ENCODE measurements at regions of chr7 and their contacts with region 1.

Region 1: DNA sequence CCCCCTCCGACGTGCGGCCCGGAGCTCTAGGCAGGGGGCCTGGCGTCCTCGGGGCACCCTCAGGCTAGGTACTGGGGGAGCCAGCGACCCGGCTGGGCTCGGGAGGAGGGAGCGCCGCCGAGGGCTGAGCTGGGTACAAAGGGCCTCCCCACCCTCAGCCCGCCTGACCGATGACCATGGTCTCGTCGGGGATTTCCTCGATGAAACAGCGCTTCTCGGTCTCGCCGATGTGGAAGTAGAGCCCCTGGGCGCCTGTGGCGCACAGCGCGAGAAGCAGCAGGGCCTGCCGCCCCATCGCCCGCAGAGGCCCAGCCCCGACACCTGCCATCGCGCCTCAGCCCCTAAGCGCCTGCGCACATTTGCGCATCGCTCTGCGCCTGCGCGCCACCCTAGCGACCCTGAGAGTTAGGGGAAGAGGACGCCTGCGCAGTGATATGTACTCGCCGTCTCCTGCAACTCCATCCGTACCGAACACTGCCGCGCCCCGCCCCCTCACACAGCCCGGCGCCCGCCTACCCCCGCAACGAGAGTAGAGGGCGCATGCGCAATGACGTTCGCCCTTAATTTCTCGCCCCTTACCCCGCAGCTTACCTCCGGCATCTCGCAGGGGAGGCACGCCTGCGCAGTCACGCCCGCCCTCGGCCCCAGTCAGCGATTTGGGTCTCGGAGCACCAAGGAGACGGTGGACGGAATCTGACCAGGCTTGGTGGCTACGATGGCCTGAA is at the start of gene TMED4:
- DNase-seq: peak; percentile 100
- ATAC-seq: peak; percentile 93
- H3K4me3 Mint-ChIP-seq: peak within 1 kb of the TSS; percentile 93
- H3K27ac Mint-ChIP-seq: peak within 1 kb of the TSS; percentile 95
- H3K4me1 Mint-ChIP-seq: peaks cover 22% of the 10 kb centered on the region
- H3K27me3 Mint-ChIP-seq: peaks cover 7% of the 10 kb centered on the region
- total RNA-seq, gene TMED4: 91.4 to 94.3 TPM

Region 2: DNA sequence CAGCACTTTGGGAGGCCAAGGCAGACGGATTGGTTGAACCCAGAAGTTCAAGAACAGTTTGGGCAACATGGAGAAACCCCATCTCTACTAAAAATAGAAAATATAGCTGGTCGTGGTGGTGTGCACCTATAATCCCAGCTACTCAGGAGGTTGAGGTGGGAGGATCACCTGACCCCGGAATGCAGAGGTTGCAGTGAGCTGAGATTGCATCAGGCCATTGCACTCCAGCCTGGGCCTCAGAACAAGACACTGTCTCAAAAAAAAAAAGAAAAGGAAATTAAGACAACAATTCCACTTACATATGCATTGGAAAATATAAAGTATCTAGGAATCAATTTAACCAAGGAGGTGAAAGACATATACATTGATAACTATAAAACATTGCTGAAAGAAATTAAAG is 17.2 kb after region 1 on chr7:
- POLR2A ChIA-PET with region 1: no interaction called
- DNase-seq: no peak
- ATAC-seq: no peak
- H3K4me3 Mint-ChIP-seq: no peak overlapping the region
- H3K27ac Mint-ChIP-seq: no peak overlapping the region
- H3K4me1 Mint-ChIP-seq: peaks cover 4% of the 10 kb centered on the region
- H3K27me3 Mint-ChIP-seq: peaks cover 20% of the 10 kb centered on the region

Region 3: GRCh38 chr7:44633254-44634186 is 51.5 kb after region 1 on chr7:
- POLR2A ChIA-PET with region 1: interaction called, 11 read pairs
- DNase-seq: no peak
- ATAC-seq: peak; percentile 6
- H3K4me3 Mint-ChIP-seq: no peak overlapping the region
- H3K27ac Mint-ChIP-seq: peak overlapping the region; percentile 73
- H3K4me1 Mint-ChIP-seq: peaks cover 72% of the 10 kb centered on the region
- H3K27me3 Mint-ChIP-seq: no peaks in the 10 kb centered on the region

Region 4: DNA sequence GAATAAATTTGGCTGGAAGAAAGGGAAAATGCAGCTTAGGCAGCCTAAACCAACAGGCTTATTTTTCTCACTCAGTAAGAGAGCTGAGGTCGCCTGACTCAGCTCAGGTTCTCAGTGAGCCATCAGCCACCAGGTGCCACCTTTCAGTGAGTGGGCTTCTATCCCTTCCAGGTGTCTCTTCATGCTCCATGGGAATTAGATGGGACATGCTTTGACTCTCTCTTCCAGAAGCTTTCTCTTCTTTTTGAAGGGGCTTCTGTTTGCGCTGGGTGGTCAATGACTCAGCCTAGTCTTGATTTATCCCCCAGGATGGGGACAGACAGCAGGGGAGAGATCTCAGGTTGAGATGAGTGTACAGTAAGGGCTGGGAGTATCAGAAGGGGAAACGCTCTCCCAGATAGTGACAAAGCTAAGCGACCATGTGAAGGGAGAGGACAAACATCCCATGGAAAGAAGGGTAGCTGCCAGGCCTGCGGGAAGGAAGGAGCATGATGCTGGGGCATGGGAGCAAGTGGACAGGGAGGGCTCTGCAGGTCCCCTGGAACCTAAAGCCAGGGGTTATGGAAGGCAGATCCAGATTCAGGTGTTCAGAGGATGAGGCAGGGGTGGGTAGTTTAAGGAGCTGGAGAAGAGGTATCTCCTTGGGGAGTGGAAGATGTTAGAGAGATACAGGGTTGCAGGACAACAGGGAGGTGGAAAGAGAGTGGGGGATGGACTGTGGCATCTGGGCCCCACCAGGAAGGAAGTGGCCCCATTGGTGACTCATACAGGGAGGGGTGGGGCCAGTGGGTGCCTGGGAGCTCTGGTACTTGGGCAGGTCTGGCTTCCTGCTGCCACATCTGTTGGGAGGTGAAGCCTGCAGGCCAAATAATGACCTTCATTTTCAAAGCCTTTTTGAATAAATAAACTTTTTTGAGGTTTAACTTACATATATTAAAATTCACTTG is 56.8 kb after region 1 on chr7:
- POLR2A ChIA-PET with region 1: interaction called, 18 read pairs
- DNase-seq: peak; percentile 78
- ATAC-seq: peak; percentile 86
- H3K4me3 Mint-ChIP-seq: peak overlapping the region; percentile 86
- H3K27ac Mint-ChIP-seq: peak overlapping the region; percentile 99
- H3K4me1 Mint-ChIP-seq: peaks cover 58% of the 10 kb centered on the region
- H3K27me3 Mint-ChIP-seq: no peaks in the 10 kb centered on the region

Region 5: DNA sequence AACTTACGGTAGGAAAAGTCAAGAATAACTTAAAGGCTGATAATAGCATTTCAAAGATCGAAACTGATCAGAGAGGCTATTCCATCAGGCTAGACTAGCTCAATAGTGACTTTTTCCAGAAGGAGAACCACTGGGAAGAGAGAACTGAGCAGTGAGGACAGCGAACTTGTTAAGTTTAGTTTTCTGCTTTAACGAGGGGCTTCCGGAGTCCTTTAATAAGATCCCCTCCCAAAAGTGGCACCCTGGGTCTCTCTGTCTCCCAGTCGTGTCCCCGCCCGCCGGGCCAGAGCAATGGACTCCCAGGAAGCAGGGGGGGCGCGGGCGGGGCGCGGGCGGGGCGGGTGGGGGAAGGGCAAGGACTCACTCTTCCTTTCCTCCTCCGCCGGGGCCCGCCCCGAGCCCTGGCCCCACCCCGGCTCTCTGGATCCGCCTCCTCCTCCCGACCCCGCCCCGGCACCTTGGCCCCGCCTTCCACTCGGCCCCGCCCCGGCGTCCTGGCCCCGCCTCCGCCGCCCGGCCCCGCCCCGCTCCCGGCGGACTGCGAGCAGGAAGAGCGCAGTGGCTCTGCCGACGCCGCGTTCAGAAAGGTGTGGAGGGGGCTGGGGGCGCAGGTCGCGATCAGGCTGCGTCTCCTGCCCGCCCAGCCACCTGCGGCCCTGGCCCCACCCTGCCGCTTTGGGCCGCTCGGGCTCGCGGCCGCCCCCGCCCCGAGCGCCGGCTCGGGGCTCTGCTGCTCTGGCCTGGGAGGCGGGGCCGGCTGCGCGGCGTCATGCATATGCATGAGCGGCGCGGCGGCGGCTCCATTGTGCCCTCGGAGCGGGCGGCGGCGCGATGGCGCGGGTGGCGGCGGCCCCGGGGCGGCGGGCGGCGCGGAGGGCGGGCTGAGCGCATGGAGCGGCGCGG is 166.3 kb after region 1 on chr7 and contains the start of gene ZMIZ2:
- POLR2A ChIA-PET with region 1: interaction called, 12 read pairs
- DNase-seq: peak; percentile 98
- ATAC-seq: peak; percentile 86
- H3K4me3 Mint-ChIP-seq: peak within 1 kb of the TSS; percentile 83
- H3K27ac Mint-ChIP-seq: peak within 1 kb of the TSS; percentile 88
- H3K4me1 Mint-ChIP-seq: peaks cover 34% of the 10 kb centered on the region
- H3K27me3 Mint-ChIP-seq: no peaks in the 10 kb centered on the region
- total RNA-seq, gene ZMIZ2: 120 to 124 TPM

Region 6: DNA sequence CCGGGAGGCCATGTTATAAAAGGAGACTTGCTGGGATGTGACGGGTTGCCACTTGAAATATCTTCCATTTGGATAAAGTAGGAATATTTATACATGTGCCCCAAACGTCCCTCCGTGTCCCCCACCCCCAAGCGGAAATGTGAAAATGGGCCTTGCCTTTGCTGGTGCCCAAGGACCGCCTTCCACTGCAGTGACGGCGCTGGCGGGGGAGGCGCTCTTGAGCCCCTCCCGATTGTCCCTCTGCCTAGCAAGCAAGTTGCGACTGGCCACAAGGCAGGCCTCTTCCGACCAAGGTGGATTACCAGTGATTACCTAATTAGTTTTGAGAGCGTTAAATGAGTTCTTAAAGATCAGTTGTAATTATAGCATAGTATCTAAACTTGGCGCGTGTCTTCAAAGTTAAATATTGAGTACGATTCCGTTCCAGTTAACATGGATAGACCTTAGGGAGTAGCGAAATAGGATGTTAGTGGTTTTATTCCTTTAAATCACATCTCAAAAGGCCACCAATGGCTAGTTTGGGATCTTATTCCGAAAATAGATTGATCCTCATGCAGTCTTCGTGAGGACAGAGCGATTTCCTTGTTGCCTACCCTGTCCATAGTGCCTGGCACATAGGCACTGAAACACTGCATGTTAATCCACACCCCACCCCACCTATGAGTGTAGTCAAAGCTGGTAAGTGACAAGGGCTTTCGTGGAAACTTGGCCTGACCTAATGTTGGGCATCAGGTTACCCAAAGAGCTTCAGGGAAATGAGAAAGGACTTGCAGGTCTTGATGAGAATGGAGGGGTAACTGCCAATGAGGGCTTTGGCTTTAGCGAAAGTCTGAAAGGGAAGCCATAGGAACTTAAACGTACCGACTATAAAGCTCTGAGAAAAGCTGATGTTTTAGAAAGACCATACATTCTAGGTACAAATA is 215.5 kb after region 1 on chr7:
- POLR2A ChIA-PET with region 1: interaction called, 20 read pairs
- DNase-seq: peak; percentile 83
- ATAC-seq: peak; percentile 49
- H3K4me3 Mint-ChIP-seq: peak overlapping the region; percentile 98
- H3K27ac Mint-ChIP-seq: peak overlapping the region; percentile 96
- H3K4me1 Mint-ChIP-seq: peaks cover 27% of the 10 kb centered on the region
- H3K27me3 Mint-ChIP-seq: no peaks in the 10 kb centered on the region

Measured in activated naive CD8-positive, alpha-beta T cell treated with anti-CD3 and anti-CD28 coated beads, Interleukin-2, amount 10 ng/mL, durations not matched to agents 7 days and 5 days (primary cell).